Caki2 (cell line): ENCODE measurements at regions of chr4 and their contacts with region 1.

Region 1: DNA sequence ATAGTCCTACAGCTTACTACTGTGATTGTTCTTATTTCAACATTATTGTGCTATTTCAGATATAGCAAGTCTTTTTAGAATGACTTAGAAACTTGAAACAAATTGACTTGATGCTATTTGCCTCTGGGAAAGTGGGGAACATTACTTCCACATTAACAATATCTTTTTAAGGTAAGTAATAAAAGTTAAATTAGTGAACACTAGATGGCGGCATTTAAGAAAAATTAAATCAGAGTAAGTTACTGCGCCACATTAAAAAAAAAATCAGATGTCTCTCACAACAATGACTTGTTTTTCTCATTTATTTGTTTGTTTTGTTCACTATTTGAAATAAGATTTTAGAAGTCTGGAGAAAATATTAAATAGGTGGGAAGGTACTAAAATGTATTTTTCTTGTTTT is 1026.9 kb upstream of the SLIT2 start:
- DNase-seq: peak; percentile 17

Region 2: DNA sequence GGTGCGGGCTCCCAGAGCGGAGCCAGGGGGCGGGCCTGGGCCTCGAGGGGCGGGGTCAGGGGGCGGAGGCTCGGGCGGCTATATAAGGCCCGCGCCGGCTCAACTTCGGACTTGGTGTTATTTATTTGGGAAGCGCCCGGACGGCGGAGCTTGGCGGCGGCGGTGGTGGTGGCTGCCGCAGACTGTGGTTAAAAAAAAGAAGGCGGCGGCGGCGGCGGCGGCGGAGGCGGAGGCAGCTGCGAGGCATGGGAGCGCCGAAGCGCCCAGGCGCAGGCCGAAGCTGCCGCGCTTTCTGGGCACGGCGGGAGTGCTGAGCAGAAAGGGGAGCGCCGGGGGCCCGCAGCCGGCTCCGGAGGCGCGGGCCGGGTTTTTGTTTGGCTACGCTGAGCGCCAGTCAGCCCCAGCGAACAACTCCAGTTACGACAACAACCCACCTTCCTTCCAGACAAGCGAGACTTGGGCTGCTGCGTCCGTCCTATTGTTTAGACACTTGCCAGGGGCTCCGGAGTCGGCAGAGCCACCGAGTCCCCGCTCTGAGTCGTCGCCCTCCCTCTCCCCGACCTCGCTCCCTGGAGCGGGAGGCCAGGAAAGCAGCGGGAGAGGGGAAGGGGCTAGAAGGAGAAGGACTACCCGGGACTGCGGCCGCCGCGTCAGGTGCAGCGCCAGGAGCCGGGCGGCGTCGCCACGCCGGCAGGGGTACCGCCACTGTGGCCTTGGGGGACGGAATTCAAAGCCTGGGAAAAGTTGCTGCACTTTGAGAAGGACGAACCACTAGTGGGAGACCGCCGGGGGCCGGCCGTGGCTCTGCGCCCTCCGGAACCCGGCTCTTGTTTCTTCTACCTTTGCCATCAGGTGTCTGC is 1027.2 kb after region 1 on chr4 and contains the start of gene SLIT2:
- in situ Hi-C with region 1: loop called (anchors 25 kb)
- DNase-seq: peak; percentile 74
- total RNA-seq, gene SLIT2: 0.07 and 0.78 TPM in 2 replicates